Naive thymus-derived CD8-positive, alpha-beta T cell (primary cell): ENCODE measurements at regions of chr11 and their contacts with region 1.

Region 1: GRCh38 chr11:66222358-66223149 is 45.9 kb upstream of the RAB1B start:
- DNase-seq: peak; percentile 85 to 96 (median 93)
- ATAC-seq: peak; percentile 95 to 97
- H3K4me3 Mint-ChIP-seq: peak overlapping the region in 2 of 10 donors; percentile 14 to 37
- H3K27ac Mint-ChIP-seq: peak overlapping the region; percentile 89 to 98 (median 94)
- H3K4me1 Mint-ChIP-seq: peaks cover 18 to 21% (median 20%) of the 10 kb centered on the region in 4 donors
- H3K27me3 Mint-ChIP-seq: no peaks in the 10 kb centered on the region

Region 2: GRCh38 chr11:66020618-66021357 is 201.8 kb before region 1 on chr11:
- POLR2A ChIA-PET with region 1: no interaction called
- DNase-seq: peak in 1 of 10 donors; percentile 60
- ATAC-seq: no peak
- H3K4me3 Mint-ChIP-seq: peak overlapping the region in 1 of 10 donors; percentile 19
- H3K27ac Mint-ChIP-seq: no peak overlapping the region
- H3K4me1 Mint-ChIP-seq: peaks cover 4 to 14% (median 7%) of the 10 kb centered on the region in 4 donors
- H3K27me3 Mint-ChIP-seq: peaks cover 1 to 8% (median 4%) of the 10 kb centered on the region in 5 donors

Region 3: GRCh38 chr11:66142370-66143263 is 79.9 kb before region 1 on chr11:
- POLR2A ChIA-PET with region 1: no interaction called
- DNase-seq: no peak
- ATAC-seq: no peak
- H3K4me3 Mint-ChIP-seq: no peak overlapping the region
- H3K27ac Mint-ChIP-seq: peak overlapping the region in 3 of 10 donors; percentile 13 to 72 (median 43)
- H3K4me1 Mint-ChIP-seq: peaks cover 28 to 76% (median 62%) of the 10 kb centered on the region in 4 donors
- H3K27me3 Mint-ChIP-seq: no peaks in the 10 kb centered on the region

Region 4: DNA sequence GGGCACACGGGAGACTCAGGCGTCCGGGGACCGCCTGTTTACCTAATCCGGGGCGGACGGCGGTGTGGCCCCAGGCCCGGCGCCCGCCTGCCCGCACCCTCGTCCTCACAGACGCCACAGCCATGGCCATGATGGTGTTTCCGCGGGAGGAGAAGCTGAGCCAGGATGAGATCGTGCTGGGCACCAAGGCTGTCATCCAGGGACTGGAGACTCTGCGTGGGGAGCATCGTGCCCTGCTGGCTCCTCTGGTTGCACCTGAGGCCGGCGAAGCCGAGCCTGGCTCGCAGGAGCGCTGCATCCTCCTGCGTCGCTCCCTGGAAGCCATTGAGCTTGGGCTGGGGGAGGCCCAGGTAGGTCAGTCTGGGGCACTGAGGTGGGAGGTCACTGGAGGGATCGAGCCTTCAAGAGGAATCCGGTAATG is 35.9 kb after region 1 on chr11:
- POLR2A ChIA-PET with region 1: interaction called, 33 read pairs
- DNase-seq: no peak
- ATAC-seq: peak in 1 of 2 donors; percentile 1
- H3K4me3 Mint-ChIP-seq: peak overlapping the region; percentile 53 to 99 (median 92)
- H3K27ac Mint-ChIP-seq: peak overlapping the region; percentile 46 to 100 (median 92)
- H3K4me1 Mint-ChIP-seq: peaks cover 19 to 40% (median 32%) of the 10 kb centered on the region in 4 donors
- H3K27me3 Mint-ChIP-seq: peaks cover 0 to 3% (median 0%) of the 10 kb centered on the region in 5 donors

Region 5: DNA sequence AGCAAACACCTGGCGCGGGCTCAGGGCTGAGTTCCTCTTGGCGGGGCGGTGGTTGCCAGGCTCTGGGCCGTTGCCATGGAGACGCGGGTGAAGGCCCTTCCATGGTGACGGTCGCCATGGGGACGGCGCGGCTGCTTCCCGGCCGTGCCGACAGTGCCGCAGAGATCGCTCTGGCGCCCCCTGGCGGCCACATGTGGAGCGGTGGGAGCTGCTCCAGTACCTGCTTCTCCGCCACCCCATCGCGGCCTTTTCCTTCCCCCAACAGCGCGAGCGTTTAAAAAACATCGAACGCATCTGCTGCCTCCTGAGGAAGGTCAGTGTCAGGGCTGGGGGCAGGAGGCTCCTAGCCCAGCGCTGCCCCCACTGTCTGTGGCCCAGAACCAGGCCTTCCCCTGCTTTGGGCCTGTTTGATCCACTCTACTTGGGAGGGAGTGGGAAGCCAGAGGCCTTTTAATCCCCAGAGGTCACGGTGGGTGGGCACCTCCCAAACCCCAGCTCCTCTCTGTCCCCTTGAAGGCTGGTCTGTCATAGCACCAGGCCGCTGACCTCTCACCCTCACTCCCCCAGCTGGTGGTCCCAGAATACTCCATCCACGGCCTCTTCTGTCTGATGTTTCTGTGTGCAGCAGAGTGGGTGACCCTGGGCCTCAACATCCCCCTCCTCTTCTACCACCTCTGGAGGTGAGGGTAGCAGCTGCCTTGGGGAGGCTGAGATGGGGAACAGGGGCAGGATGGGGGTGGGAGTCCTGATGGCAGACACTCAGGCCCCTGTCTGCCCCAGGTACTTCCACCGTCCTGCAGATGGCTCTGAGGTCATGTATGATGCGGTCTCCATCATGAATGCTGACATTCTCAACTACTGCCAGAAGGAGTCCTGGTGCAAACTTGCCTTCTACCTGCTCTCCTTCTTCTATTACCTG is 60.2 kb after region 1 on chr11:
- POLR2A ChIA-PET with region 1: interaction called, 13 read pairs
- DNase-seq: peak; percentile 97 to 100 (median 100)
- ATAC-seq: peak; percentile 74 to 84
- H3K4me3 Mint-ChIP-seq: peak overlapping the region in 9 of 10 donors; percentile 15 to 78 (median 56)
- H3K27ac Mint-ChIP-seq: peak overlapping the region; percentile 35 to 97 (median 87)
- H3K4me1 Mint-ChIP-seq: peaks cover 7 to 52% (median 43%) of the 10 kb centered on the region in 4 donors
- H3K27me3 Mint-ChIP-seq: peaks cover 0 to 3% (median 0%) of the 10 kb centered on the region in 5 donors